ENCODE measurements at regions of chr12 and their contacts with region 1.

Region 1: DNA sequence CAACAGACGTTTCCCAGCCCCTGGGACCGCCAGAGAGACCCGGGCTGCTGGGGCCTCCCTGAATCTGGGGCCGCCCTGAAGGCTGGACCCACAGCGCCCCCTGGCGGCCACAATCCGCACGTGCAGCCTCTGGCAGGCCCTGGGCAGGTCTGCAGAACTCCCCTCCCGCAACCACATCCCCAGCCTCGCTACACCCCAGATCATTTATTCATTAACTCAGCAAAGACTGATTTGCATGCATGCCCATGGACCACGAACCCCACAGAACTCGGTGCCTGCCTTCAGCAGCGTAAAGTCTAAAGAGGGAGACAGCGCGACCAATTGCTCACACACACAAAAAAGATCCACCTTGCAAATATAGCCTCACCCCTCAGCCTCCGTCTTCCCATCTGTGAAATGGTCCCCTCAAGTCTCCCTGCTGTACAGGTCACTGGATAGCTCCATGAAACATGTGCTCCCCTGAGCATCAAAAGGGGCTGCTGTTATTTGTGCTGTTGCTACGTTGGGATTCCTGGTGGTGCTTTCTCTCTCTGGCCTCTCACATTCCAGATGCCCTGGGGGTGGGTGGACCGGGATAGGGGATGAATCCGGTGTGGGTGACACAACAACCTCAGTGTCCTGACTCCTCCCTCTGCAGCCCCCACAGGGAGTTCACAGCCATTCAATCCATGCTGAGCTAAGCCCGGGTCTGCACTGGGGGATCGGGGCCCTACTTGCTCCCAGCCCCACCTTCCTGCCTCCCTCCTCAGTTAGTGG is 96.4 kb downstream of the SCARB1 start:
- DNase-seq: peak; percentile 80 to 84
- ATAC-seq: peak; percentile 72 to 84
- H3K4me3 ChIP-seq: no peak overlapping the region
- H3K27ac ChIP-seq: peak overlapping the region; percentile 33 to 86; a peak in 5 of 6 replicates
- H3K4me1 ChIP-seq: peaks cover 42% of the 10 kb centered on the region
- CTCF ChIP-seq: peak; percentile 97
- EP300 ChIP-seq: no peak
- POLR2A ChIP-seq: no peak
- RAD21 ChIP-seq: peak; percentile 98 to 99

Region 2: GRCh38 chr12:124053851-124054250 is 713.4 kb before region 1 on chr12:
- CTCF ChIA-PET with region 1: interaction called, 11 read pairs
- POLR2A ChIA-PET with region 1: no interaction called
- DNase-seq: peak; percentile 44 to 73
- ATAC-seq: peak; percentile 94 to 96
- H3K4me3 ChIP-seq: no peak overlapping the region
- H3K27ac ChIP-seq: no peak overlapping the region
- H3K4me1 ChIP-seq: 0 out of 3 replicates have a peak, but pooled peaks cover 3% of the 10 kb centered on the region
- CTCF ChIP-seq: peak; percentile 58
- EP300 ChIP-seq: no peak
- POLR2A ChIP-seq: no peak
- RAD21 ChIP-seq: peak; percentile 78 to 86

Region 3: GRCh38 chr12:124369055-124369900 is 398.0 kb before region 1 on chr12:
- CTCF ChIA-PET with region 1: interaction called, 10 read pairs
- POLR2A ChIA-PET with region 1: no interaction called
- DNase-seq: peak in 1 of 2 experiments; percentile 97
- ATAC-seq: peak; percentile 71 to 82
- H3K4me3 ChIP-seq: peak overlapping the region; percentile 6; the same call in 1 of the 3 replicates
- H3K27ac ChIP-seq: peak overlapping the region; percentile 92 to 98
- H3K4me1 ChIP-seq: peaks cover 81% of the 10 kb centered on the region
- CTCF ChIP-seq: no peak; the same call in 2 of the 3 replicates
- EP300 ChIP-seq: peak; percentile 92 to 96
- POLR2A ChIP-seq: no peak
- RAD21 ChIP-seq: peak in 1 of 2 experiments; percentile 45; a peak in 3 of 5 replicates

Region 4: DNA sequence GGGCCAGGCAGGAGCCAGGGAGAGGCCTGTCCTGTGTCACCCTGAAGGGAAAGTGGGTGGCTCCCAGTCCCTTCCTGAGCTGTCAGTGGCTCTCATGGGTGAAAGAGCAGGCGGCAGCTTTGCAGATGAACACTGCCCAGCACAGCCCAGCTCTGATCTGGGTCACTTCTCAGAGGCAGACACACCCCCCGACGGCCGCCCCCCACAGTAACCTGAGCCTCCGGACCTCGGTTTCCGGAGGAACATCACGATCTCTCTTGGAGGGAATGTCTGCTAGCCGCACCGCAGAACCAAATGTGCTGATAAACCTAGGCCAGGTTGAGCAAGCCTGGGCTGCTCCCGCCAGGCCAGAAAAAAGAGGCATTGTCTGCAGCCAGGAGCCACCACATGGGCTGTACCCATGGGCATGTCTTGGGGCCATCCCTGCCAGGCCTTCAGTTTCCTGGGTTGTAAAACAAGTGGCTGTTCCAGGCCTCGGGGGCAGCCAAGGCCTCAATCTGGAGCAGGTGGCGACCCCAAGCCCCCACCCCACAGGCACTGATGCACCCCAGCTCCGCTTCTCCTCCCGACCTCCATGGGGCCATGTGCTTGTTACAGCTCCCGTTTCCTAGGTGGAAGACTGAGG is 257.5 kb before region 1 on chr12:
- CTCF ChIA-PET with region 1: interaction called, 13 read pairs
- POLR2A ChIA-PET with region 1: no interaction called
- DNase-seq: no peak
- ATAC-seq: peak in 1 of 2 experiments; percentile 30; a peak in 3 of 6 replicates
- H3K4me3 ChIP-seq: no peak overlapping the region
- H3K27ac ChIP-seq: peak overlapping the region; percentile 46 to 66; a peak in 4 of 6 replicates
- H3K4me1 ChIP-seq: peaks cover 47% of the 10 kb centered on the region
- CTCF ChIP-seq: no peak
- EP300 ChIP-seq: no peak
- POLR2A ChIP-seq: no peak
- RAD21 ChIP-seq: no peak

Region 5: DNA sequence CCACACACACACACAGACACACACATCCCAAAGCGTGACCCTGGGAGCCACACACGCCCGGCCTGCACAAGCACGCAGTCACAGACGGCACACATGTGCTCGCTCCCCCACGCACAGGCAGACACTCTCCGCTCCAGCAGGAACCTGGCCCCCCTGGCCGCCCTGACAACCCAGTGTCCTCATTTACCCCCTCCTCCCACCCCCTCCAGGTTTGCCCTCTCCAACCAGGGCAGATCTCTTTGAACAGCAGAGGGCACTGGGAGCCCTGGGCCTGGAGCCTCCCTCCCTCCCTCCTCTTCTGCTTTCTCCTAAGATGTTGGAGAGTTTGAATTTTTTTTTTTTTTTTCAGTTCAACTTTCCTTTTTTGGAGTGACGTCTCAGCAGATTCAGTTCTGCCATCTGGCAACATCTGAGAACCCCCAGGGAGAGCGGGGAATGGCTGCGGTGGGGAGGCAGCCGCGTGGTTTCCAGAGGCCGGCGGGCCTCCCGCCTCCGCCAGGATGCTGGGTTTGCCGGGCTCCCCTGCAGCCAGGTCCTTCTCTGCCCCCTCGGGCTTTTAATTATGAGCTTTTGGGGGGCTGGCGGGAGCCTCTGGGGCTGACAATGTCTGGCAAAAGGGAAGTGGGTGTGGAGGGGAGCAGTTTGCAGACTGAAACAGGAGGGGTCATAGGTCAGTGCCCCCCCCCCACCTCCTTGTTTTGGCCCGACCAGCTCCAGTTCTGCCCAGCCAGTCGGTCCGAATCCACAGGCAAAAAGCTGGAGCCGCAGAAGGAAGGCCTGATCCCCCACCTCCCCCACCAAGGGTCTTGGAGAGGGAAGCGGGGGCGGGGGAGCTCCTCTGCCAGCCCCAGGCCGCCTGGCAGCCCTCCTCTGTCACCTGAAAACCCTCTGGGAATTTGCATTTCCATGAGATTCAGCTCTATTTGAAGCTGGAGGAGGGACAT is 198.5 kb before region 1 on chr12:
- CTCF ChIA-PET with region 1: interaction called, 26 read pairs
- POLR2A ChIA-PET with region 1: no interaction called
- DNase-seq: peak in 1 of 2 experiments; percentile 79
- ATAC-seq: peak; percentile 54 to 57
- H3K4me3 ChIP-seq: no peak overlapping the region; the same call in 2 of the 3 replicates
- H3K27ac ChIP-seq: peak overlapping the region; percentile 89 to 99
- H3K4me1 ChIP-seq: peaks cover 37% of the 10 kb centered on the region
- CTCF ChIP-seq: peak; percentile 51
- EP300 ChIP-seq: no peak
- POLR2A ChIP-seq: no peak
- RAD21 ChIP-seq: peak; percentile 84 to 85

Region 6: DNA sequence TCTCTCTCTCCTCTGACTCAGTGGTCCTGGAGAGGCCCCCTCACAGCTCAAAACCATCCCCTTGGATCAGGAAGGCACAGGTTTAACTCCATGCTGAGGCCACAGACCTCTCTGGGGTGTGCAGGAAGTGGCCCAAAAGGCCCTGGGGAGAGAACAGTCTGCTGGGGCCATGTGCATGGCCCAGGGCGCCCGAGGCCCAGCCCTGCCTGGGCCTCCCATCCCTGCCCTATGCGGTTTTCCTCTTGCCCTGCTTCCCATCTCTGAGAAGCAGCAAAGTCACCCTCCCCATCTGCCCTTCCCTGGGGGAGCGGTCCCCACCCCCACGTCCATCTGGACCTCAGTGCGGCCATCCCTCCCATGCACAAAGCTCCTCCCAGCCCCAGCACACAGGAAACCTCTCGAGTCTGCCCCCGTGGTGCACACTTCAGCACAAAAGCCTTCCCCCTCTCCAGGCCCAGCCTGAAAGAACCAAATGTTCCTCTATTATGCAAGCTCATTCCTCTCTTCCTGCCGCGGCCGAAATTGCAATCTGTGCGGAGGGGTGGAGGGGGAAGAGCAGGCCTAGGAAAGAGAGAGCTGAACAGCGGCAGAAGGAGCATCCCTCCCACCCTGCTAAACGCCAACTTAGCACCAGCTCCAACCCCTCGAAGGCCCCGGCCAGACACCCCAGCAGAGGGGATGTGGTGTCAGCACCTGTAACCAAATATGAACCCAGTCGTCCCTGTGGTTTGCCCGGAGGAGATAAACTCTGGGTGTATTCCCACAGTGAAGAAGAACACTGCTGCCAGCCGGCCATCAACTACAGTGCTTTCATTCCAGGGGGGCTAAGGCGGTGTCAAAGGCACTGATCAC is 12.1 kb before region 1 on chr12:
- CTCF ChIA-PET with region 1: interaction called, 101 read pairs
- POLR2A ChIA-PET with region 1: no interaction called
- DNase-seq: no peak
- ATAC-seq: 0 out of 6 replicates have a peak, but pooled peaks have one; percentile 5 to 9
- H3K4me3 ChIP-seq: no peak overlapping the region
- H3K27ac ChIP-seq: peak overlapping the region; percentile 20 to 28; a peak in 2 of 6 replicates
- H3K4me1 ChIP-seq: peaks cover 8% of the 10 kb centered on the region
- CTCF ChIP-seq: no peak
- EP300 ChIP-seq: no peak
- POLR2A ChIP-seq: no peak; the same call in 1 of the 2 replicates
- RAD21 ChIP-seq: no peak